ENCODE measurements at regions of chr12 and their contacts with region 1.

Region 1: GRCh38 chr12:116599285-116600136 is 40.3 kb downstream of the MAP1LC3B2 start:
- DNase-seq: peak; percentile 86 to 94 (median 91)
- ATAC-seq: peak; percentile 83 to 91
- H3K4me3 ChIP-seq: peak overlapping the region; percentile 16
- H3K27ac ChIP-seq: peak overlapping the region; percentile 68
- H3K4me1 ChIP-seq: peaks cover 11% of the 10 kb centered on the region
- H3K27me3 ChIP-seq: no peaks in the 10 kb centered on the region

Region 2: GRCh38 chr12:115998119-115998633 is 601.3 kb before region 1 on chr12:
- intact Hi-C with region 1: loop called in 2 of 4 experiments (anchors 10 kb)
- DNase-seq: no peak
- ATAC-seq: peak; percentile 26 to 58
- H3K4me3 ChIP-seq: no peak overlapping the region
- H3K27ac ChIP-seq: no peak overlapping the region
- H3K4me1 ChIP-seq: no peaks in the 10 kb centered on the region
- H3K27me3 ChIP-seq: no peaks in the 10 kb centered on the region

Region 3: DNA sequence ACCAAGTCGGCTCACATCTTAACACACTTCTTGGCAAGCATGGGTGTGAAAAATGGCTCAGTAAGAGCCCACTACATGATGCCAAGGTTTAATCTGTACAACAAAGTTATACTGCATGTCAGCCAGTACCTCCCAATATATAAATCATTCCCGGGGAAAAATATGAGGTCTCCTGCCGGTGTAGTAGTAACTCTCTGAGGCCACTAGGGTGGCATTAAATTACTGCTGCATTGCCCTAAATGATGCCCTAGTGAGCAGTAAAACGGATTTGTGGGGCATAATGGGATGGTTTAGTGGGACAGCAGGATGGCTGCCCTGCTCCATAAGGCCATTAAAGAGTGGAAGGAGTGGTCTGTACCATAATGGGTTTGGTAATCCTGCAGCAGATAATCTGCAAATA is 589.7 kb before region 1 on chr12:
- intact Hi-C with region 1: loop called in 3 of 4 experiments (anchors 5 to 10 kb)
- DNase-seq: no peak
- ATAC-seq: no peak
- H3K4me3 ChIP-seq: no peak overlapping the region
- H3K27ac ChIP-seq: no peak overlapping the region
- H3K4me1 ChIP-seq: peaks cover 2% of the 10 kb centered on the region
- H3K27me3 ChIP-seq: no peaks in the 10 kb centered on the region

Region 4: GRCh38 chr12:116015525-116015924 is 584.0 kb before region 1 on chr12:
- intact Hi-C with region 1: loop called in 2 of 4 experiments (anchors 5 to 10 kb)
- DNase-seq: no peak
- ATAC-seq: peak; percentile 79 to 87
- H3K4me3 ChIP-seq: no peak overlapping the region
- H3K27ac ChIP-seq: no peak overlapping the region
- H3K4me1 ChIP-seq: peaks cover 2% of the 10 kb centered on the region
- H3K27me3 ChIP-seq: no peaks in the 10 kb centered on the region

Region 5: DNA sequence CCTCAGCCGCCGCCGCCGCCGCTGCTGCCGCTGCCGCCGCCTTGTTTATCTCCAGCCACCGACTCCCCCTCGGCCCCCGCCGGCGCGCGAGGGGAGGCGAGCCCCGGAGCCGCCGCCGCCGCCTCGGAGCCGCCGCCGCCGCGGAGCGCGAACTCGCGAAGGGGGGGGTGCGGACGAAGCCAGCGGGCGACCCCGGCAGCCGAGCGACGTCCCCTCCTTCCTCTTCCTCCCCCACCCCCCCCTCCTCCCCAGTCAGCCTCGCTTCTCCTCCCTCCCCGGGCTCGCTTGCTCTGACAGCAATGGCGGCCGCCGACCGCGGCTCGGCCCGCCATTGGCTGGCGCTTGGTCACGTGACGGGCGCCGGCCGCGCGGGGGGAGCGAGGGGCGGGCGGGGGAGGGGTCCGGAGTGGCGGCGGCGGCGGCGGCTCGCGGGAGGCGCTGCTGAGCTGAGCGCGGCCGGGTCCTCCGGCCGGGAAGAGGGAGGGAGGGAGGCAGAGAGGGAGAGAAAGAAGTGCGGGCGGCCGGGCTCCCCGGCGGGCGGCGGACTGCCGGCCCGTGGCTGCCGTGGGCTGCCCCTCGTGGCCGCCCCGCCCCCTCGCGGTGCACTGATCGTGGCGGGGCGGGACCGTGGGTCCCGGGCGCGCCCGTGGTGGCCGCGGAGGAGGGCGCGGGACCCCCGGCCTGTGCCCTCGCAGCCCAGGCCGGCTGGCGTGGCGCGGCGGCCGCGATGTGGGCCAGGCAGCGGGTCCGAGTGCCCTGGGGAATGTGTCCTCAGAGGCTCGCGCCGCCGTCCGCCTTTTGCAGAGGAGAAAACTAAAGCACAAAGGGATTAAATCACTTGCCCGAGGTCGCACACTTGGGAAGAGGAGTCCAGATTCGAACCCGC is 321.9 kb before region 1 on chr12 and contains the start of gene MED13L:
- intact Hi-C with region 1: loop called in 2 of 4 experiments (anchors 5 to 10 kb)
- DNase-seq: peak; percentile 88 to 96 (median 95)
- ATAC-seq: peak; percentile 91 to 96
- H3K4me3 ChIP-seq: peak within 1 kb of the TSS; percentile 82
- H3K27ac ChIP-seq: peak within 1 kb of the TSS; percentile 99
- H3K4me1 ChIP-seq: no peaks in the 10 kb centered on the region
- H3K27me3 ChIP-seq: no peaks in the 10 kb centered on the region
- total RNA-seq, gene MED13L: 68.8 to 73.5 (median 69.8) TPM

Region 6: GRCh38 chr12:116697305-116697704 is 97.8 kb after region 1 on chr12:
- intact Hi-C with region 1: no loop called
- DNase-seq: peak in 1 of 3 donors; percentile 67
- ATAC-seq: peak; percentile 23 to 41
- H3K4me3 ChIP-seq: no peak overlapping the region
- H3K27ac ChIP-seq: no peak overlapping the region
- H3K4me1 ChIP-seq: peaks cover 3% of the 10 kb centered on the region
- H3K27me3 ChIP-seq: no peaks in the 10 kb centered on the region